ENCODE measurements at regions of chr2 and their contacts with region 1.

Region 1: DNA sequence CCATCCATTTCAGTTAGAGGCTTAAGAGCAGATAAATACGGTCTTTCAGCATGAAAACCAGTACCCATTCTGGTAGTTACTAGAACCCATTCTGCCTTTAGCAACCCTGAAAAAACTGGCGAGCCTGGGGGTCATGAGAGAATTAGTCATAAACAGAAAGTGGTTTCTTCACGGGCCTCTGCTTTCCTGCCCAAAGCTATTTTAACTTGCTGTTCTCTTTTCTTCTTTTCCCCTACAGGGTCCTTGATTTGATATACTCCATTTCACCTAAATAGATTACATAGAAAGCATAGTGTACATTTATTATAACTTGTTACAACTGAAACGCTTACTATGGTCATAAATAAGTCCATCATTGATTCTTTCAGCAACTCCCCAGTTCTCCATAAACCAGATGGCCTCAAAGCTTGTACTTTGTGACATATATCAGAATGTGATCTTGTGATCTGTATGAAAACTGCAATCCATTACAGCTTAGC is 48.3 kb downstream of the WDFY1 start:
- DNase-seq: peak; percentile 22
- ATAC-seq: peak; percentile 45
- H3K4me3 Mint-ChIP-seq: peak overlapping the region; percentile 67
- H3K27ac Mint-ChIP-seq: peak overlapping the region; percentile 99
- H3K4me1 Mint-ChIP-seq: peaks cover 74% of the 10 kb centered on the region
- H3K27me3 Mint-ChIP-seq: no peaks in the 10 kb centered on the region
- CTCF ChIP-seq: no peak

Region 2: DNA sequence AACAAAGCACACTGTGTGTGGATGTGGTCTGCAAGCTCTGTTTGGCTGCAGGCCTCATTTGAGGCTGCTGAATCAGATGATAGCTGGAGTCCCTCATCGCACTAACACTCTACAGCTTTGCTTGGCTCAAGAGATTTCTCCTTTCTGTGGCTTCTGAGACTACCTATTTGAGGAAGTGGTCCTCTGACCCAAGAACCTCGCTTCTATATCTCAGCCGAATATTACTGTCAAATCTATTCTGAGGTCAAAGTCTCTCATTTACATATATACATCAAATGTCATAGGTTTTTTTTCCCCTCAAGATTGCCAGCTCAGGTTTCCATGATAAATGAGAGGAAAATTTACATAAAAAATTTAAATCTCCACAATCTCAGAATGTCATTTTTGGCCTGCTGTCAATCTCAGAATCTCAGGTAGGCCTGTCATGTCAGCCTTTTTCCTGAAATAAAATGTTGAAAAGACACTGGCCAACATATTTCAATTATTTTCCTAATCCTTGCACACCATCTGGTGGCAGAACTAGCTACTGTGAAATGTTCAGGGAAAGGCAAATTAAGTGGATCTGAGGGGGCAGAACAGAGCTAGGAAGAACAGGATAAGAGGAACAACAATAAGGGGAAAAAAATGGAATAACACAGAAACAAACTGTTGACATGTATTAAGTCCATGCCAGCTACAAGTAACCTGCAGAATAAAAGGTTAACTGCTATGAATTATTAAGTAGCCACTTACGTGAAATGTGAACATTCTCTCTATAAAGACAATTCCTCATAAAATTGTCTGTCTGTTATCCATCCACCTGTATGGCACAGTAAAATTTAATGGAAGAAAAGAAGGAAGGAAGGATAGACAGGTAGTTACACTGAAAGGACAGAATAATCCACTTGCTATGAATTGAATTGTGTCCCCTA is 98.8 kb before region 1 on chr2:
- CTCF ChIA-PET with region 1: interaction called, 3 read pairs
- POLR2A ChIA-PET with region 1: interaction called, 7 read pairs
- intact Hi-C with region 1: loop called (anchors 5 kb)
- DNase-seq: no peak
- ATAC-seq: peak; percentile 88
- H3K4me3 Mint-ChIP-seq: peak overlapping the region; percentile 21
- H3K27ac Mint-ChIP-seq: peak overlapping the region; percentile 24
- H3K4me1 Mint-ChIP-seq: peaks cover 57% of the 10 kb centered on the region
- H3K27me3 Mint-ChIP-seq: no peaks in the 10 kb centered on the region
- CTCF ChIP-seq: no peak

Region 3: DNA sequence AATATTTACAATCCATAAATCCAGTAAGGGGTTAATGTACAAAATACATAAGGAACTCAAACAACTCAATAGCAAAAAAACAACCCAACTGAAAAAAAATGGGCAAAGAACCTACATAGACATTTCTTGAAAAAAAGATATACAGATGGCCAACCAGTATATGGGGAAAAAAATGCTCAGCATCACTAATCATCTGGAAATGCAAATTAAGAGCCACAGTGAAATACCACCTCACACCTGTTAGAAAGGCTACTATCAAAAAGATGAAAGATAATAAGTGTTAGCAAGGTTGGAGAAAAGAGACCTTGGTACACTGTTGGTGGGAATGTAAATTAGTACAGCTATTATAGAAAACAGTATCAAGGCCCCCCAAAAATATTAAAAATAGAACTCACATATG is 74.1 kb before region 1 on chr2:
- CTCF ChIA-PET with region 1: no interaction called
- POLR2A ChIA-PET with region 1: no interaction called
- intact Hi-C with region 1: no loop called
- DNase-seq: no peak
- ATAC-seq: peak; percentile 74
- H3K4me3 Mint-ChIP-seq: peak overlapping the region; percentile 63
- H3K27ac Mint-ChIP-seq: peak overlapping the region; percentile 26
- H3K4me1 Mint-ChIP-seq: peaks cover 71% of the 10 kb centered on the region
- H3K27me3 Mint-ChIP-seq: no peaks in the 10 kb centered on the region
- CTCF ChIP-seq: no peak

Region 4: DNA sequence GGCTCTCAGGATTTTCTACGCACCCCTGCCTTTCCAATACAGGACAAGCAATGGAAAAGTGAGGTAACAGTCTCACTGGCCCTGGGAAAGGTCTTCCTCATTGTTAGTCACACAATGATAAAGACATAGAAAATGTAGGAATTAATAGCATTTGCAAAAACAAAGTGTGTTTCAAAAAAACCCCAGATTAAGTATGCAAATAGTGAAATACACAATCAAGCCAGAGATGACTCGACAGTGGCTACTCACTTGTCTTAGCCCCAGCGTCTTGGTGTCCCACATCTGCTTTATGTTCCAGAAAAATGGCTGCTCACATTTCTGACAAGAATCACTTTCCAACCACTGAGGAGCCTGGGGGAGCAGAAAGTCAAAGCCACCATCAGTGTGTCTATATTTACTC is 12.5 kb before region 1 on chr2:
- CTCF ChIA-PET with region 1: interaction called, 3 read pairs
- POLR2A ChIA-PET with region 1: interaction called, 18 read pairs
- intact Hi-C with region 1: loop called (anchors 1 kb)
- DNase-seq: no peak
- ATAC-seq: peak; percentile 78
- H3K4me3 Mint-ChIP-seq: peak overlapping the region; percentile 3
- H3K27ac Mint-ChIP-seq: peak overlapping the region; percentile 79
- H3K4me1 Mint-ChIP-seq: peaks cover 42% of the 10 kb centered on the region
- H3K27me3 Mint-ChIP-seq: no peaks in the 10 kb centered on the region
- CTCF ChIP-seq: no peak

Region 5: GRCh38 chr2:223944703-223945531 is 48.0 kb after region 1 on chr2 and contains the start of gene WDFY1:
- CTCF ChIA-PET with region 1: interaction called, 3 read pairs
- POLR2A ChIA-PET with region 1: interaction called, 19 read pairs
- intact Hi-C with region 1: loop called (anchors 1 kb)
- DNase-seq: peak; percentile 80
- ATAC-seq: peak; percentile 94
- H3K4me3 Mint-ChIP-seq: peak within 1 kb of the TSS; percentile 95
- H3K27ac Mint-ChIP-seq: peak within 1 kb of the TSS; percentile 88
- H3K4me1 Mint-ChIP-seq: peaks cover 58% of the 10 kb centered on the region
- H3K27me3 Mint-ChIP-seq: no peaks in the 10 kb centered on the region
- CTCF ChIP-seq: no peak
- total RNA-seq, gene WDFY1: 67.2 and 77.0 TPM in 2 replicates

Region 6: DNA sequence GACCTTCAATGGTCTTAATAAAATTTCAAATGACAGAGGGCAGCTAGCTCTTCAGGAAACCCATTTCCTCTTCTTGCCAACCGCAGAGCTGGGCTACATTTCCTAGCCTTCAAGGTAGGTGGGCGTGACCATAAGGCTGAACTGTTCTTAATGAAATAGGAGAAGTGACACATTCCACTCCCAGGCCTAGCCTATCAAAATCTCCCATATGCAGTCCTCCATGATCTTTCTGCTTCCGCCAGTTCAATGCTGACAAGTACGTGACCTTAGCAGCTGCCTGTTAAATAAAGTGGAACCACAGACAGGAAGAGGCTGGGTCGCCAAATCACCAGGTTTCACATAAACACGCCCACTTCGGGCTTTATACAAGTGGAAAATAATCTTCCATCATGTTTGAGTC is 129.0 kb after region 1 on chr2:
- CTCF ChIA-PET with region 1: no interaction called
- POLR2A ChIA-PET with region 1: interaction called, 3 read pairs
- intact Hi-C with region 1: loop called (anchors 10 kb)
- DNase-seq: peak; percentile 27
- ATAC-seq: peak; percentile 99
- H3K4me3 Mint-ChIP-seq: peak overlapping the region; percentile 53
- H3K27ac Mint-ChIP-seq: peak overlapping the region; percentile 79
- H3K4me1 Mint-ChIP-seq: peaks cover 49% of the 10 kb centered on the region
- H3K27me3 Mint-ChIP-seq: no peaks in the 10 kb centered on the region
- CTCF ChIP-seq: no peak

Region 7: GRCh38 chr2:224585205-224586088 is 688.6 kb after region 1 on chr2 and contains the start of gene CUL3:
- CTCF ChIA-PET with region 1: no interaction called
- POLR2A ChIA-PET with region 1: no interaction called
- intact Hi-C with region 1: loop called (anchors 5 kb)
- DNase-seq: peak; percentile 99
- ATAC-seq: peak; percentile 89
- H3K4me3 Mint-ChIP-seq: peak within 1 kb of the TSS; percentile 96
- H3K27ac Mint-ChIP-seq: peak within 1 kb of the TSS; percentile 93
- H3K4me1 Mint-ChIP-seq: peaks cover 47% of the 10 kb centered on the region
- H3K27me3 Mint-ChIP-seq: no peaks in the 10 kb centered on the region
- CTCF ChIP-seq: no peak
- total RNA-seq, gene CUL3: 99.4 and 114 TPM in 2 replicates